Pancreas (tissue), 10 donors: ENCODE measurements at regions of chr14 and their contacts with region 1.

Region 1: GRCh38 chr14:45434221-45434620 is 181.2 kb upstream of the MIS18BP1 start:
- DNase-seq: no peak
- ATAC-seq: no peak
- H3K4me3 ChIP-seq: no peak overlapping the region
- H3K27ac ChIP-seq: no peak overlapping the region
- H3K4me1 ChIP-seq: no peaks in the 10 kb centered on the region
- H3K27me3 ChIP-seq: no peaks in the 10 kb centered on the region
- CTCF ChIP-seq: no peak

Region 2: GRCh38 chr14:45531022-45531421 is 96.8 kb after region 1 on chr14:
- intact Hi-C with region 1: loop called in 1 of 3 experiments (anchors 10 kb)
- DNase-seq: no peak
- ATAC-seq: no peak
- H3K4me3 ChIP-seq: no peak overlapping the region
- H3K27ac ChIP-seq: no peak overlapping the region
- H3K4me1 ChIP-seq: no peaks in the 10 kb centered on the region
- H3K27me3 ChIP-seq: no peaks in the 10 kb centered on the region
- CTCF ChIP-seq: no peak